CD4-positive, alpha-beta memory T cell (primary cell): ENCODE measurements at regions of chr7 and their contacts with region 1.

Region 1: DNA sequence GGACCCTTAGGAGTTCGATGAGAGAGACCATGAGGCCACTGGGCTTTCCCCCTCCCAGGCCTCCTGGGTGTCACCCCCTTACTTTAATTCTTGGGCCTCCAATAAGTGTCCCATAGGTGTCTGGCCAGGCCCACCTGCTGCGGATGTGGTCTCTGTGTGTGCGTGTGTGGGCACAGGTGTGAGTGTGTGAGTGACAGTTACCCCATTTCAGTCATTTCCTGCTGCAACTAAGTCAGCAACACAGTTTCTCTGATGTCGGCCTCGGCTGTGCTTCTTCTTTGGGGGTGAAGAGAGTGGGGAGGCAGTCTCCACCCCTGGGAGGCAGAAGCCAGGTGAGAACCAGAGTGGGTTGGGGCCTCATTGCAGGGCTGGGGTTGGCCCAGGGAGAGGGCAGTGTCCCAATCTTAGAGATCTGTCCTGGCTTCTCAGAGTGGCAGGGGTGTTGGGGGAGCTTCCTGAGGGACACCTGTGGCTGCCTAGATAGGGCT is 1.5 kb downstream of the PVRIG start:
- DNase-seq: peak; percentile 87 to 94 (median 88)
- H3K4me3 ChIP-seq: peak overlapping the region; percentile 84 to 91
- H3K4me3 Mint-ChIP-seq: peak overlapping the region; percentile 92 to 98 (median 96)
- H3K27ac ChIP-seq: peak overlapping the region; percentile 90
- H3K27ac Mint-ChIP-seq: peak overlapping the region; percentile 96 to 99 (median 99)
- H3K4me1 ChIP-seq: peaks cover 69% of the 10 kb centered on the region
- H3K4me1 Mint-ChIP-seq: peaks cover 28 to 75% (median 57%) of the 10 kb centered on the region in 4 donors
- H3K27me3 ChIP-seq: no peaks in the 10 kb centered on the region
- H3K27me3 Mint-ChIP-seq: no peaks in the 10 kb centered on the region

Region 2: DNA sequence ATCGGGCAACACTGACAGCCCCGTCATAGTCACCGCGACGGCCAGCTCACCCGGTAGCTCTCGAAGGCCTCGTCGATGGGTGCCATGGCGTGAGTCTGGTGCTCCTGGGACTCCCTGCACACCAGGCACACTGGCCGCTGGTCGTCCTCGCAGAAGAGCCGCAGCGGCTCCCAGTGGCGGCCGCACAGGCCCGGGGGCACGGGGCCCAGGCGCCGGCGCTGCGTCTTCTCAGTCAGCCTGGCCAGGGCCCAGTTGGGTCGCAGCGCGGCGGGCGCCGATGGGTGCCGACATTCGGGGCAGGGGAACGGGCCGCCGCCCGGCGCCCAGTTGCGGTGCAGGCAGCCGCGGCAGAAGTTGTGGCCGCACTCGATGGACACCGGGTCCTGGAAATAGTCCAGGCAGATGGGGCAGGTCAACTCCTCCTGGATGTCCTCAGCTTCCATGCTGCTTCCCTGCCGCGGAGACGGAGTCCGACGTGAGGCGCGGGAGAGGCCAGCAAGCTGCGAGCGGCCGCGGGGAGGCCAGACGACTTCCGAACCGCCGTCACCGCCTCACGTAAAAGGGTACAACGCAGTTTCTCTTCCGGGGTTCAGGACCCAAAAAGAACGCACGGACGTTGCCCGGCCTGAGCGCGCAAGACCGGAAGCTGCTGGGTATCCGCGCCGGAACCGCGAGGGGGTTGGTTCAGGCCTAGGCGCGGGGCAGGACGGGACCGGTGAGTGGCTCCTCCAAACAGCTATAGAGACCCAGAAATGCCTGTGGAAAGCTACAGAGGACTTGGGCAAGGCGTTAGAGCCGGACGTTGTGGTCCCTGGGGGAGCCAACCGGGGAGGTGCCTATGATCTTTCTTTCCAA is 302.1 kb before region 1 on chr7 and contains the start of gene TRIM4:
- CTCF ChIA-PET with region 1: no interaction called
- POLR2A ChIA-PET with region 1: interaction called, 3 read pairs
- intact Hi-C with region 1: loop called (anchors 5 kb)
- DNase-seq: peak; percentile 89 to 90 (median 89)
- H3K4me3 ChIP-seq: peak within 1 kb of the TSS; percentile 85 to 89
- H3K4me3 Mint-ChIP-seq: peak within 1 kb of the TSS; percentile 95 to 98 (median 96)
- H3K27ac ChIP-seq: peak within 1 kb of the TSS; percentile 94
- H3K27ac Mint-ChIP-seq: peak within 1 kb of the TSS; percentile 95 to 99 (median 98)
- H3K4me1 ChIP-seq: peaks cover 41% of the 10 kb centered on the region
- H3K4me1 Mint-ChIP-seq: peaks cover 37 to 61% (median 48%) of the 10 kb centered on the region in 4 donors
- H3K27me3 ChIP-seq: no peaks in the 10 kb centered on the region
- H3K27me3 Mint-ChIP-seq: no peaks in the 10 kb centered on the region
- total RNA-seq, gene TRIM4: 69.0 to 69.7 TPM

Region 3: DNA sequence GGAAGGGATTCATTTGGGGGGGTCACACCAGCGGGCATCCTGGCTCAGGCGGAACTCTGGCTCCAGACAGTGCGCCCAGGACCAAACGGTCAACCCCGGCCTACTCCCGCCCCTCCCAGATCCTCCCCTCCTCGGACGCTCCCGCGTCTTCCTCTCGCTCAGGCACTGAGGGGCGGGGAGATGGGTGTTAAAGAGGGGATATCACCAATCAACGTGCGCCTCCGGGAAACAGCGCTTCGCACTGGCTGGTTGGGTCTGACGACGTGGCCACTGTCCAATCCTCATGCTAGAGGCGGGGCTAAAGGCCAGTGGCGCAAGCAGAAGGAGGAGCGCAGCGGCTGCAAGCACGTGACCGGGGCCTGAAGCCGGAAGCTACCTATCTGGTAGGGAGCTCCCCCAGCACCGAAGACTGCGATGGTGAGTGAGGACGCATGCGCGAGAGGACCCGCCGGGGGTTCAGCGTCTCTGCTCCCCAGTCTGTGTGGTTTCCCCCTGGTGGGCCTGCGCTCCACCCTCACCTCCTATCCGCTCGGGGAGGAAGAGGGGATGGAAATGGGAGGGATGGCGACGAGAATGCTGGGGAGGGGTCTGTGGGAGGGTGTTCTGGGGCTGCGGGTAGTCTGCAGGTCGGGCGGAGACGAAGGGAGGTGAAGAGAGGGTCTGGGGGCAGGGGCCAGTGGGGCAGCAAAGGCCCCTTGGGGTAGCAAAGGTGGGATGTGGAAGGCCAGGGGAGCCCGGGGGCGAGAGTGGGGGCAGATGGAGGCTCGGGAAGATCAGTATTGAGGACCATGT is 72.5 kb before region 1 on chr7 and contains the start of gene LAMTOR4:
- CTCF ChIA-PET with region 1: interaction called, 10 read pairs
- POLR2A ChIA-PET with region 1: interaction called, 28 read pairs
- intact Hi-C with region 1: loop called (anchors 1 kb)
- DNase-seq: peak; percentile 94 to 99 (median 99)
- H3K4me3 ChIP-seq: peak within 1 kb of the TSS; percentile 83 to 93
- H3K4me3 Mint-ChIP-seq: peak within 1 kb of the TSS; percentile 88 to 99 (median 94)
- H3K27ac ChIP-seq: peak within 1 kb of the TSS; percentile 92
- H3K27ac Mint-ChIP-seq: peak within 1 kb of the TSS; percentile 95 to 99 (median 97)
- H3K4me1 ChIP-seq: peaks cover 45% of the 10 kb centered on the region
- H3K4me1 Mint-ChIP-seq: peaks cover 18 to 45% (median 31%) of the 10 kb centered on the region in 4 donors
- H3K27me3 ChIP-seq: no peaks in the 10 kb centered on the region
- H3K27me3 Mint-ChIP-seq: no peaks in the 10 kb centered on the region
- total RNA-seq, gene LAMTOR4: 178 to 189 TPM

Region 4: DNA sequence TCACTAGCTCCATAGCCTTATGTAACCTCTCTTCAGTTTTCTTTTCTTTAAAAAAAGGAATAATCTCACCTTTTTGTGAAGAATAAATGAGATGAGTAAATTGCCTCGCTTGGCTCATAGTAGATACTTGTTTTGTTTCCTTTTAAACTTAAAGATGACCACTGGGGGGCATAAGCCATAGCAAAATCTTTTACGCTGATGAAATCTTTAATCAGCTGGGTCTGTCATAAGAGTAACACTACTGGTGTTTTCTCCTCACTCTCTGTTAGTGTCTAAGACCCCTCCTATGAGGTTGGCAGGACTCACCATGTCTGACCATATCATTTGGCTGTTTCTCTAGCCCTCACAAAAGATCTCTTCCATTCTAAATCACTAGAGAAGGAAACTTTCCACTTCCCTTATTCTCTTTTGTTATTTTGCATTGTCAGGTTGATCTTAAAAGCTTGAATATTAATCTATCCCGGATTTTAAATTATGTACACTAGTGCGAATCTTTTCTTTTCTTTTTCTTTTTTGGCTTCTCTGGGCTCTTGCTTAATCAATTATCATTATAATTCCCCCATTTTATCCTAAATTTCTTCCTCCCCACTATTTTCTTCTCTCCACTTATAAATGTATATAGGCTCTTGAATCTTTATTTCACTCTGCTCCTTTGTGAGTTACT is 31.1 kb before region 1 on chr7:
- CTCF ChIA-PET with region 1: interaction called, 23 read pairs
- POLR2A ChIA-PET with region 1: interaction called, 7 read pairs
- intact Hi-C with region 1: loop called (anchors 1 kb)
- DNase-seq: peak in 4 of 5 donors; percentile 48 to 59 (median 57)
- H3K4me3 ChIP-seq: no peak overlapping the region
- H3K4me3 Mint-ChIP-seq: no peak overlapping the region
- H3K27ac ChIP-seq: no peak overlapping the region
- H3K27ac Mint-ChIP-seq: peak overlapping the region in 6 of 7 donors; percentile 0 to 69 (median 30)
- H3K4me1 ChIP-seq: no peaks in the 10 kb centered on the region
- H3K4me1 Mint-ChIP-seq: peaks cover 3 to 6% (median 5%) of the 10 kb centered on the region in 4 donors
- H3K27me3 ChIP-seq: no peaks in the 10 kb centered on the region
- H3K27me3 Mint-ChIP-seq: no peaks in the 10 kb centered on the region

Region 5: GRCh38 chr7:100200693-100201092 is 20.6 kb before region 1 on chr7:
- CTCF ChIA-PET with region 1: interaction called, 15 read pairs
- POLR2A ChIA-PET with region 1: no interaction called
- intact Hi-C with region 1: no loop called
- DNase-seq: no peak
- H3K4me3 ChIP-seq: no peak overlapping the region
- H3K4me3 Mint-ChIP-seq: no peak overlapping the region
- H3K27ac ChIP-seq: no peak overlapping the region
- H3K27ac Mint-ChIP-seq: no peak overlapping the region
- H3K4me1 ChIP-seq: no peaks in the 10 kb centered on the region
- H3K4me1 Mint-ChIP-seq: no peaks in the 10 kb centered on the region
- H3K27me3 ChIP-seq: no peaks in the 10 kb centered on the region
- H3K27me3 Mint-ChIP-seq: peaks cover 0 to 2% of the 10 kb centered on the region in 2 donors

Region 6: GRCh38 chr7:100257017-100257416 is 35.7 kb after region 1 on chr7:
- CTCF ChIA-PET with region 1: no interaction called
- POLR2A ChIA-PET with region 1: no interaction called
- intact Hi-C with region 1: no loop called
- DNase-seq: no peak
- H3K4me3 ChIP-seq: no peak overlapping the region
- H3K4me3 Mint-ChIP-seq: no peak overlapping the region
- H3K27ac ChIP-seq: no peak overlapping the region
- H3K27ac Mint-ChIP-seq: no peak overlapping the region
- H3K4me1 ChIP-seq: no peaks in the 10 kb centered on the region
- H3K4me1 Mint-ChIP-seq: peaks cover 0 to 2% (median 0%) of the 10 kb centered on the region in 4 donors
- H3K27me3 ChIP-seq: no peaks in the 10 kb centered on the region
- H3K27me3 Mint-ChIP-seq: no peaks in the 10 kb centered on the region

Region 7: GRCh38 chr7:100271716-100272537 is 50.7 kb after region 1 on chr7:
- CTCF ChIA-PET with region 1: interaction called, 4 read pairs
- POLR2A ChIA-PET with region 1: interaction called, 6 read pairs
- intact Hi-C with region 1: loop called (anchors 1 kb)
- DNase-seq: peak; percentile 97 to 99 (median 98)
- H3K4me3 ChIP-seq: peak overlapping the region in 1 of 2 donors; percentile 53
- H3K4me3 Mint-ChIP-seq: peak overlapping the region; percentile 76 to 88 (median 82)
- H3K27ac ChIP-seq: peak overlapping the region; percentile 55
- H3K27ac Mint-ChIP-seq: peak overlapping the region in 6 of 7 donors; percentile 21 to 88 (median 64)
- H3K4me1 ChIP-seq: peaks cover 5% of the 10 kb centered on the region
- H3K4me1 Mint-ChIP-seq: peaks cover 5 to 14% (median 10%) of the 10 kb centered on the region in 4 donors
- H3K27me3 ChIP-seq: no peaks in the 10 kb centered on the region
- H3K27me3 Mint-ChIP-seq: no peaks in the 10 kb centered on the region